ENCODE measurements at regions of chr21 and their contacts with region 1.

Region 1: DNA sequence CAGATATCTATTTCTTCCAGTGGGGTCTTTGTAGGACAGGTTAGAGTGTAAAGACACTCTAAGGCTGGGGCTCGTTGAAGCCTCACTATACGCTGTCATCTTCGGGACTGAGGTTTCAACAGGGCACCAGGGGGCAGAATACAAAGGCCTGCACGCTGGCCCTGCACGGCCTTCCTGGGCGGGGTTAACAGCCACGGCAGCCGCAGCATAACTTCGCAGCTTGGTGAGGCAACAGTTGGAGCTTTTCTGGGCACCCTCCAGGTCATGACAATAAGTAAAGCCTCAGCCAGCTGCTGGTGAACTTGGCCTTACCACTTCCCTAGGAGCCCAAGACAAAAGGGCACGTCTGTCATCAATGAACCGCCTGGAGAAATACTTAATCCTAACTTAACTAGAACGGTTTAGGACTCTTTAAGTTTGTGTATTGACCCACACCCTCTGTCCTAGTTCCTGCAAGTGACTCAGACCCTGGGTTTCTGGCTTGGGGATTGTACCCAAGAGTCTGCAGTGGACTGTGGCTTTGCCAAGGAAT is 2.3 kb upstream of the RUNX1 start:
- DNase-seq: peak; percentile 72
- H3K4me3 Mint-ChIP-seq: peak overlapping the region; percentile 93
- H3K27ac Mint-ChIP-seq: peak overlapping the region; percentile 83
- H3K4me1 Mint-ChIP-seq: peaks cover 52% of the 10 kb centered on the region
- H3K27me3 Mint-ChIP-seq: no peaks in the 10 kb centered on the region

Region 2: DNA sequence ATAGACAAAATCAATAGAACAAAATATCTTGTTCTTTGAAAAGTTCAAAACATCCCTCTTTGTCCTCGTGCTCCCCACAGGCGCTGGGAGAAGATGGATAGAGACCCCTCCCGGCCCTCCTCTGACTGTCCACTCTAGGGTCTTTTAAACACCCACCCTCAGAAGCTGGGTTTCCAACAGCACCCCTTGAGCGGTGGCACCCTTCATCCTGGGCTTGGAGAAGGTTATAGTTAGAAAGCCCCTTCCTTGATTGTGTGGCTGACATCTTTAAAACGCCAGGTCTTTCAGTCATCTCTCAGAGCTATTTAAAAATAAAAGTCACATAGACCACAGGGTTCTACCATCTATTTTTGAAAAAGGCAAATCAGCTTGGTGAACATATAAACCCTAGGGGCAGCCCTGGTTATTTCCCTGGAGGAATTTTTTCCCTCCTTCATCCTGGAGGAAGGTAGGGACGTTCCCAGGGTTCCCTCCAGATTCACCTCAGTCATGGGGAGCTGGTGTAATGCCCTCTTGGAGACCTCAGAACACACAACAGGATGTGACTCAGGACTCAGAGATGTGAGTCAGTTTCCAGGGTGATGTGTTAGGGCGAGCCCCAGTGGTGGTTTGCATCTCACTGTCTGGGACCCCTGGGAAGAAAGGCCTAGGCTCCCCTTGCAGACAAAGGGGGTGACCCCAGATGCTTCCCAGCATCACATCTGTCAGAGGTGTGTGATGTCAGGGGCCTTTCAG is 244.0 kb before region 1 on chr21:
- intact Hi-C with region 1: loop called (anchors 1 kb)
- DNase-seq: peak; percentile 54
- H3K4me3 Mint-ChIP-seq: peak overlapping the region; percentile 56
- H3K27ac Mint-ChIP-seq: peak overlapping the region; percentile 93
- H3K4me1 Mint-ChIP-seq: peaks cover 92% of the 10 kb centered on the region
- H3K27me3 Mint-ChIP-seq: no peaks in the 10 kb centered on the region

Region 3: GRCh38 chr21:34974162-34974981 is 77.0 kb before region 1 on chr21:
- intact Hi-C with region 1: loop called (anchors 1 kb)
- DNase-seq: peak; percentile 65
- H3K4me3 Mint-ChIP-seq: peak overlapping the region; percentile 72
- H3K27ac Mint-ChIP-seq: peak overlapping the region; percentile 79
- H3K4me1 Mint-ChIP-seq: peaks cover 80% of the 10 kb centered on the region
- H3K27me3 Mint-ChIP-seq: peaks cover 12% of the 10 kb centered on the region

Region 4: GRCh38 chr21:35036465-35037383 is 14.6 kb before region 1 on chr21:
- intact Hi-C with region 1: no loop called
- DNase-seq: no peak
- H3K4me3 Mint-ChIP-seq: peak overlapping the region; percentile 32
- H3K27ac Mint-ChIP-seq: peak overlapping the region; percentile 82
- H3K4me1 Mint-ChIP-seq: peaks cover 96% of the 10 kb centered on the region
- H3K27me3 Mint-ChIP-seq: no peaks in the 10 kb centered on the region

Region 5: GRCh38 chr21:35095859-35096291 is 44.5 kb after region 1 on chr21:
- intact Hi-C with region 1: loop called (anchors 1 kb)
- DNase-seq: no peak
- H3K4me3 Mint-ChIP-seq: no peak overlapping the region
- H3K27ac Mint-ChIP-seq: peak overlapping the region; percentile 67
- H3K4me1 Mint-ChIP-seq: peaks cover 42% of the 10 kb centered on the region
- H3K27me3 Mint-ChIP-seq: no peaks in the 10 kb centered on the region

Region 6: GRCh38 chr21:35113064-35113463 is 61.7 kb after region 1 on chr21:
- intact Hi-C with region 1: no loop called
- DNase-seq: no peak
- H3K4me3 Mint-ChIP-seq: no peak overlapping the region
- H3K27ac Mint-ChIP-seq: peak overlapping the region; percentile 22
- H3K4me1 Mint-ChIP-seq: peaks cover 11% of the 10 kb centered on the region
- H3K27me3 Mint-ChIP-seq: no peaks in the 10 kb centered on the region

Region 7: GRCh38 chr21:35254006-35254764 is 202.8 kb after region 1 on chr21:
- intact Hi-C with region 1: loop called (anchors 1 kb)
- DNase-seq: no peak
- H3K4me3 Mint-ChIP-seq: no peak overlapping the region
- H3K27ac Mint-ChIP-seq: no peak overlapping the region
- H3K4me1 Mint-ChIP-seq: peaks cover 13% of the 10 kb centered on the region
- H3K27me3 Mint-ChIP-seq: no peaks in the 10 kb centered on the region

Region 8: GRCh38 chr21:35508139-35508888 is 457.0 kb after region 1 on chr21:
- intact Hi-C with region 1: loop called (anchors 1 kb)
- DNase-seq: no peak
- H3K4me3 Mint-ChIP-seq: no peak overlapping the region
- H3K27ac Mint-ChIP-seq: no peak overlapping the region
- H3K4me1 Mint-ChIP-seq: peaks cover 68% of the 10 kb centered on the region
- H3K27me3 Mint-ChIP-seq: no peaks in the 10 kb centered on the region

Region 9: DNA sequence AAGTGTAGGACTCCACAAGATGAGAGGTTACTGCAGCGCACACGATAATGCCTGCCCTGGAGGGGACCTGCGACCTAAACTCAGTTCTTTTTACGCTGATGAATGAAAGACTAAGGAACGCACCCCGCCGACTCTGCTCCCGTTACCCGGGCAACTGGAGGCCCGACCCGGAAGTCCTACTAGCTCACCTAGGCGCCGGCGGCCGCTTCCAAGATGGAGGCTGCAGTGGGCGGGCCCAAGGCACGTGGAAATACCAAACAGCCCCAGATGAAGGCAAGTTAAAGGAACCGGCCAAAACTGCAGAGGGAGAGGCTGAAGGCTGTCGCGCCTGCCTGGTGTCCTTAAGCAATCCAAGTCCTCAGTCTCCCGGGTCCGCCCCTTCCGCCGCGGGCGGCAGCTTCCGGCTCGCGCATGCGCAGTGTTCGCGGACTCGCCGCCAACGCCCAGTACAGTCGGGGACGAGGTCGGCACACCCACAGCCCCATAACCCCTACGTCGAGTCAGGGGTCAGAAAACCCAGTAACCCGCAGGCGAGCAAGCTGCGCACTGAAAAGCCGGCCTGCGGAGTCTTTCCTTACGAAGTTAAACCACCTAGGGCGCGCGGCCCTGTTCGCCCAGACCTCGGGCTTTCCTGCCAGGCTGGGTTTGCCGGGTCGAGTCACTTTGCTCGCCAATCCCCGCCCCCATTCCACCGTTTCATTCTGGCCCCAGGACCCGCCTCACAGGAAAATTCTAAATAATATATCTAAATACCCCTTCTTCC is 1009.0 kb after region 1 on chr21 and contains the start of gene SETD4:
- intact Hi-C with region 1: loop called (anchors 10 kb)
- DNase-seq: peak; percentile 91
- H3K4me3 Mint-ChIP-seq: peak within 1 kb of the TSS; percentile 93
- H3K27ac Mint-ChIP-seq: peak within 1 kb of the TSS; percentile 98
- H3K4me1 Mint-ChIP-seq: peaks cover 23% of the 10 kb centered on the region
- H3K27me3 Mint-ChIP-seq: peaks cover 3% of the 10 kb centered on the region
- total RNA-seq, gene SETD4: 21.9 and 22.0 TPM in 2 replicates

Measured in activated T-helper 1 cell treated with anti-CD3 and anti-CD28 coated beads, Interleukin-12 subunit alpha, Interleukin-12 subunit beta, Interleukin-2, Interleukin-4 antibody, amounts not matched to agents 30 ng/mL and 10 ng/mL and 1 ng/mL, durations not matched to agents 14 hours and 24 hours and 36 hours (primary cell).